B cell (primary cell): ENCODE measurements at regions of chr9 and their contacts with region 1.

Region 1: DNA sequence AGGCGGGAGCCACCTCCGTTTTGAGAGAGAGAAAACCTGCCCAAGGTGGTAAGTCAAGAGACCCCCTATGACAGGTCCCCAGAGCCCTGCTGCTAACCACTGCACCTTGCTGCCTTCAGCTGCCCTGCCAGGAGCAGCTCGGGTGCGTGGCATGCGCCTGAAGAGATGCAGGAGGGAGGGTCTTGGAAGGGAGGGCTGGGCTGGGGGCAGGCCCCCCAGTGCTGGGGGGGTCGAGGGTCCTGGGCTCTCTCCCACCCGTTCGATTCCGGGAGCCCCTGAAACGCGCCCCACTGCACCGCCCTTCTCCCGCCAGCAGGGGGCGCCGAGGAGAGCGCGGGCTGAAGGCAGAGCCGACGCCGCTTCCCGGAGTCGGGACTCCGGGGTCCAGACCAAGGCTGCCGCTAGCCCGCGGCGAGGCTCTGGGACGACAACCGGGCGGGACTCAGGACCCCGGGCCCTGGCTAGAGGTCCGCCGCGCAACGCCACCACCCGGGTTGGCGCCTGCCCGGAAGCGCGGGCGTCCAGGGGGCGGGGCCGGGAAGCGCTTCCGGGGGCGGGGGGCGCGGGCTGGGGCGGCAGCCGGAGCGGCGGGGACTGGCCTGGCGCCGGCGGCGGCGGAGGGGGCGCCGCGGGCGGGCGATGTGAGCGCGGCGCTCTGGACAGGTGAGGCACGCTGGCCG is at the start of gene ZBTB34:
- DNase-seq: peak; percentile 87
- ATAC-seq: peak; percentile 84
- H3K4me3 ChIP-seq: peak within 1 kb of the TSS; percentile 58 to 88 (median 81)
- H3K4me3 Mint-ChIP-seq: peak within 1 kb of the TSS; percentile 93
- H3K27ac ChIP-seq: peak within 1 kb of the TSS; percentile 31 to 79
- H3K27ac Mint-ChIP-seq: peak within 1 kb of the TSS; percentile 91
- H3K4me1 ChIP-seq: peaks cover 26 to 32% of the 10 kb centered on the region in 2 donors
- H3K4me1 Mint-ChIP-seq: peaks cover 33% of the 10 kb centered on the region
- H3K27me3 ChIP-seq: peaks cover 0 to 14% (median 0%) of the 10 kb centered on the region in 4 experiments
- H3K27me3 Mint-ChIP-seq: peaks cover 18% of the 10 kb centered on the region
- CTCF ChIP-seq: peak; percentile 100
- total RNA-seq, gene ZBTB34: 12.1 and 13.2 TPM in 2 replicates

Region 2: DNA sequence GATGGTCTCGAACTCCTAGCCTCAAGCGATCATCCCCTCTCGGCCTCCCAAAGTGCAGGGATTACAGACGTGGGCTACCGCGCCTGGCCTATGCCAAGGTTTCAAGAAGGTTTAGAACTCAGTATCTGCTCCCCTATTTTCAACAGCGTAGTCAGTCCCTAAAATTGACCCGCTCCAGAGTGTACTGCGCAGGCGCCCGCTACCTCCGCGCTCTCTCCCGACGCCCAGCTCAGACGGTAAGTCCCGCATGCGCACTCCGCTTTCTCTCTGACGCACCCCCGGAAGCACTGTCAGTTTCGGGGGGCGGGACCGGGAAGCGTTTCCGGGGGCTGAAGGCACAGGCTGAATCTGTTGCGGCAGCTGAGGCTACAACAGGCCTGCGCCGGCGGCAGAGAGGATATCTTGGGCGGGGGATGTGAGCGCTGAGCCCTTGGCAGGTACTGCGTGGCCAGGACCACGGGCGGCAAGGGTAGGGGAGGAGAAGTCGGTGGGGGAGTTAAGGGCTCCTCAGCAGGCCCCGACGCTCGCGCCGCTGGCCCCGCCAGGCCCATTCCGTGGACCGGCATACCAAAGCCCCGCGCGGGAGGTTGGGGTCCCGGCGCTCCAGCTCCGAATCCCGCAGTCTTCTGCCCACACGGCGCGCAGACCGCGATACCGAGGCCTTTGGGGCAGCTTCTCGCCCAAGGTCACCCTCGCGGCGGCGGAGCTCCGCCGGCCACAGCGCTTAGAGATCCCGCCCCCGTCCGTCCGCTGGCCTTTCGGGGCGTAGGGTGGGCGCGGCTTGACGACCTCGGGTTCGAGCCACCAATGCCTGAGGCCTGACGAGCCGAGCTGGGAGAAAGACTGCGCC is 55.3 kb before region 1 on chr9 and contains the start of gene ZBTB43:
- CTCF ChIA-PET with region 1: no interaction called
- POLR2A ChIA-PET with region 1: no interaction called
- intact Hi-C with region 1: loop called (anchors 1 kb)
- DNase-seq: peak; percentile 97
- ATAC-seq: peak; percentile 85
- H3K4me3 ChIP-seq: peak within 1 kb of the TSS; percentile 83 to 94 (median 88)
- H3K4me3 Mint-ChIP-seq: peak within 1 kb of the TSS; percentile 87
- H3K27ac ChIP-seq: peak within 1 kb of the TSS; percentile 75 to 89
- H3K27ac Mint-ChIP-seq: peak within 1 kb of the TSS; percentile 97
- H3K4me1 ChIP-seq: peaks cover 17 to 20% of the 10 kb centered on the region in 2 donors
- H3K4me1 Mint-ChIP-seq: peaks cover 31% of the 10 kb centered on the region
- H3K27me3 ChIP-seq: no peaks in the 10 kb centered on the region
- H3K27me3 Mint-ChIP-seq: no peaks in the 10 kb centered on the region
- CTCF ChIP-seq: no peak
- total RNA-seq, gene ZBTB43: 19.5 and 20.2 TPM in 2 replicates

Region 3: DNA sequence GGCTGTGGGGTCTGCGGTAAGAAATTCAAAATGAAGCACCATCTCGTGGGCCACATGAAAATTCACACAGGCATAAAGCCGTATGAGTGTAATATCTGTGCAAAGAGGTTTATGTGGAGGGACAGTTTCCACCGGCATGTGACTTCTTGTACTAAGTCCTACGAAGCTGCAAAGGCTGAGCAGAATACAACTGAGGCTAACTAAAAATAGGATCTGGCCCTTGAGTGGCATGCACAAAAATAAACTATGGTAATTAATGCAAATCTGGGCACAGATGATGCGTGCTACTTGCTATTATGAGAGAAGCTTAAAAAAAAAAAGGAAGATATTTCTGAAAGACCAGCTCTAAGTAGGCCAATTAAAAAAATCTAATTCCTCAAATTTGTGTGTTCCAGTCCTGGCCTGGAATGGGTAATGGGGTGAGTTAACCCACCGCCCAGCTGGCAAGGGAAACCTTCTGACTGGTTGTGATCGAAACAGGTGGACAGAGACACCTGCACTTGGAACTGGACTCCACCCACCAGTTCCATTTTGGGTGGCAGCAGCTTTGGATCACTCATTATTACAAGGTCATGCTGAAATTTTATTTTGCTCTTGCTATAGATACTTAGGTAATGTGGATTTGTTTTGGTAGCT is 26.4 kb before region 1 on chr9:
- CTCF ChIA-PET with region 1: no interaction called
- POLR2A ChIA-PET with region 1: no interaction called
- intact Hi-C with region 1: no loop called
- DNase-seq: no peak
- ATAC-seq: no peak
- H3K4me3 ChIP-seq: no peak overlapping the region
- H3K4me3 Mint-ChIP-seq: no peak overlapping the region
- H3K27ac ChIP-seq: no peak overlapping the region
- H3K27ac Mint-ChIP-seq: no peak overlapping the region
- H3K4me1 ChIP-seq: peaks cover 0 to 12% of the 10 kb centered on the region in 2 donors
- H3K4me1 Mint-ChIP-seq: peaks cover 36% of the 10 kb centered on the region
- H3K27me3 ChIP-seq: no peaks in the 10 kb centered on the region
- H3K27me3 Mint-ChIP-seq: no peaks in the 10 kb centered on the region
- CTCF ChIP-seq: no peak

Region 4: GRCh38 chr9:126904586-126904985 is 44.4 kb after region 1 on chr9:
- CTCF ChIA-PET with region 1: no interaction called
- POLR2A ChIA-PET with region 1: no interaction called
- intact Hi-C with region 1: no loop called
- DNase-seq: no peak
- ATAC-seq: no peak
- H3K4me3 ChIP-seq: no peak overlapping the region
- H3K4me3 Mint-ChIP-seq: no peak overlapping the region
- H3K27ac ChIP-seq: no peak overlapping the region
- H3K27ac Mint-ChIP-seq: no peak overlapping the region
- H3K4me1 ChIP-seq: no peaks in the 10 kb centered on the region
- H3K4me1 Mint-ChIP-seq: no peaks in the 10 kb centered on the region
- H3K27me3 ChIP-seq: peaks cover 0 to 7% (median 0%) of the 10 kb centered on the region in 4 experiments
- H3K27me3 Mint-ChIP-seq: peaks cover 29% of the 10 kb centered on the region
- CTCF ChIP-seq: no peak

Region 5: GRCh38 chr9:126914458-126915280 is 54.5 kb after region 1 on chr9 and contains the start of gene RALGPS1:
- CTCF ChIA-PET with region 1: interaction called, 6 read pairs
- POLR2A ChIA-PET with region 1: interaction called, 5 read pairs
- intact Hi-C with region 1: loop called (anchors 1 kb)
- DNase-seq: peak; percentile 96
- ATAC-seq: peak; percentile 94
- H3K4me3 ChIP-seq: peak within 1 kb of the TSS in 4 of 5 experiments; percentile 33 to 63 (median 44)
- H3K4me3 Mint-ChIP-seq: peak within 1 kb of the TSS; percentile 89
- H3K27ac ChIP-seq: peak within 1 kb of the TSS; percentile 24 to 33
- H3K27ac Mint-ChIP-seq: peak within 1 kb of the TSS; percentile 86
- H3K4me1 ChIP-seq: peaks cover 3 to 13% of the 10 kb centered on the region in 2 donors
- H3K4me1 Mint-ChIP-seq: peaks cover 12% of the 10 kb centered on the region
- H3K27me3 ChIP-seq: peaks cover 0 to 5% (median 0%) of the 10 kb centered on the region in 4 experiments
- H3K27me3 Mint-ChIP-seq: peaks cover 17% of the 10 kb centered on the region
- CTCF ChIP-seq: no peak
- total RNA-seq, gene RALGPS1: 39.9 and 48.6 TPM in 2 replicates